GM10248 (cell line): ENCODE measurements at regions of chr5 and their contacts with region 1.

Region 1: DNA sequence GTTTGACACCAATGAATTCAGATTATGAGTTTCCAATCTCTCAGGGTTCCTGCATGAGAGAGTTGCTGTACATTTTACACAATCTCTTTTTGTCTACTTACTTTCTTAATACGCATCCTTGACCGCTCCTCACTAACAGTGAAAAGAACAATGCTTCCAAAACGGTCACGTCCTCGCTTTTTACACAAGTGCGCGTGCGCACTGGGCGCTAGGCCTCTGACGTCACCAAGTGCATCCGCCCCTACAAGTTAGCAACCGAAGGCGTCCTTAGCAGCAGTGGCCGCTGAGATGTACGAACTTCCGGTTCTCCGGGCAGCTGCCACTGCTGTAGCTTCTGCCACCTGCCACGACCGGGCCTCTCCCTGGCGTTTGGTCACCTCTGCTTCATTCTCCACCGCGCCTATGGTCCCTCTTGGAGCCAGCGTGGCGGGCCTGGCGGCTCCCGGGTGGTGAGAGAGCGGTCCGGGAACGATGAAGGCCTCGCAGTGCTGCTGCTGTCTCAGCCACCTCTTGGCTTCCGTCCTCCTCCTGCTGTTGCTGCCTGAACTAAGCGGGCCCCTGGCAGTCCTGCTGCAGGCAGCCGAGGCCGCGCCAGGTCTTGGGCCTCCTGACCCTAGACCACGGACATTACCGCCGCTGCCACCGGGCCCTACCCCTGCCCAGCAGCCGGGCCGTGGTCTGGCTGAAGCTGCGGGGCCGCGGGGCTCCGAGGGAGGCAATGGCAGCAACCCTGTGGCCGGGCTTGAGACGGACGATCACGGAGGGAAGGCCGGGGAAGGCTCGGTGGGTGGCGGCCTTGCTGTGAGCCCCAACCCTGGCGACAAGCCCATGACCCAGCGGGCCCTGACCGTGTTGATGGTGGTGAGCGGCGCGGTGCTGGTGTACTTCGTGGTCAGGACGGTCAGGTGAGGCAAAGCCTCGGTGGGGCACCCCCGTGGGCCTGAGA is at the start of gene FAM174A:
- DNase-seq: peak; percentile 90
- CTCF ChIP-seq: no peak

Region 2: GRCh38 chr5:100520348-100520747 is 15.0 kb before region 1 on chr5:
- CTCF ChIA-PET with region 1: interaction called, 10 read pairs
- POLR2A ChIA-PET with region 1: no interaction called
- DNase-seq: no peak
- CTCF ChIP-seq: no peak

Region 3: DNA sequence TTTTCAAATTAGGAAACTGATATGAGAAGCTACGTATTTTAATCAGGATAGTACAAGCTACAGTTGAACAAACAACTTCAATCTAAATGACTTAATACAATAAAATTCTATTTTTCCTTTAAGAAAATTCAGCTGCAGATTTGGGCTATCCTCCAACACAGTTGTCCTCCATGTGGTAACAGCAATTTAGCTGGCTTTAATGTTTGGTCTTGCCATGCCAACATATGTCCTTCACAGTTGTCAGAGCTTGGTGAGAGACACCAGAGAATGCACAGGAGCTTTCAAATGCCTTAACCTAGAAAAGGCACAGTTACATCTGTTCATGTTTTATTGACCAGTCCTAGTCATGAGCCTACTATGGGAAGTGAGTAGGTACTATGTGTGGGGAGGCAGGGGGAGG is 10.7 kb after region 1 on chr5:
- CTCF ChIA-PET with region 1: interaction called, 11 read pairs
- POLR2A ChIA-PET with region 1: no interaction called
- DNase-seq: no peak
- CTCF ChIP-seq: no peak